Calu3 (cell line): ENCODE measurements at regions of chr14 and their contacts with region 1.

Region 1: DNA sequence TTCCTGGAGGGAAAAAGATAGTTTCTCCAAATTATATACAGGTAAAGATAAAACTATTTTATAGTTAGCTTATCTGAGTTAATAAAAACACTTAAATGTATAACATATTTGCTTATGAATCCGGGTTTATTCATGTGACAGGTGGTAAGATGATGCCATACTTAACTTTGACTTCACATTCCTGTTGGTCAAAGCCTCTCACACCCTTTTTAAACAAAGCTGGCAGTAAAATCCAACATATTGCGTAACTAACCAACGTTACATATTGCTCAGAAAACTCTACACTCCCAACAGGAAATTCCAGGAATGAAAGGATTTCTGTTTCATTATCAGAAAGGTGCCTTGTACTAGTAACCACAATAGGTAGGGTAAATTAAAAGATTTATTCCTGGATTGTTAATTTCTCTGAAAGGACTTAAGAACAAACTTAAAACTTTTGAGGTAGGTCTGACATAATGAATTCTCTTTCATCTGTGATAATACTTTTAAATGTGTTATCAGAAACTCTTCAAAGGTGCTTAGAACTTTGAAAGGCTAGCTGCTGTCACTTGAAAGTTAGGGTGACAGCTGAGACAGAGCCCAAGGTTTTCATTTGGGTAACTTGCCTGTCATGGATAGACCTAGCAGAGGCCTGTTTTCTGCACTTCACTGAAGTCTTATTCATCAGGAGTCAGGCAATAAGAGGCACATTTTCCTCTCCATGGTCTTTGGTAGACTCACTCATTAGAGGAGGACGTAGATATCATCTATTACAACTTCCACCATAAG is 23.8 kb upstream of the CATSPERB start:
- DNase-seq: peak; percentile 32
- H3K4me3 Mint-ChIP-seq: no peak overlapping the region
- H3K27ac Mint-ChIP-seq: peak overlapping the region; percentile 96
- H3K4me1 Mint-ChIP-seq: peaks cover 35% of the 10 kb centered on the region
- H3K27me3 Mint-ChIP-seq: no peaks in the 10 kb centered on the region
- CTCF ChIP-seq: no peak

Region 2: GRCh38 chr14:91649930-91650329 is 105.8 kb before region 1 on chr14:
- CTCF ChIA-PET with region 1: no interaction called
- intact Hi-C with region 1: loop called (anchors 10 kb)
- DNase-seq: peak; percentile 41
- H3K4me3 Mint-ChIP-seq: no peak overlapping the region
- H3K27ac Mint-ChIP-seq: no peak overlapping the region
- H3K4me1 Mint-ChIP-seq: peaks cover 9% of the 10 kb centered on the region
- H3K27me3 Mint-ChIP-seq: no peaks in the 10 kb centered on the region
- CTCF ChIP-seq: peak; percentile 19

Region 3: GRCh38 chr14:91732452-91733167 is 23.1 kb before region 1 on chr14:
- CTCF ChIA-PET with region 1: no interaction called
- intact Hi-C with region 1: no loop called
- DNase-seq: no peak
- H3K4me3 Mint-ChIP-seq: no peak overlapping the region
- H3K27ac Mint-ChIP-seq: no peak overlapping the region
- H3K4me1 Mint-ChIP-seq: peaks cover 9% of the 10 kb centered on the region
- H3K27me3 Mint-ChIP-seq: no peaks in the 10 kb centered on the region
- CTCF ChIP-seq: no peak

Region 4: DNA sequence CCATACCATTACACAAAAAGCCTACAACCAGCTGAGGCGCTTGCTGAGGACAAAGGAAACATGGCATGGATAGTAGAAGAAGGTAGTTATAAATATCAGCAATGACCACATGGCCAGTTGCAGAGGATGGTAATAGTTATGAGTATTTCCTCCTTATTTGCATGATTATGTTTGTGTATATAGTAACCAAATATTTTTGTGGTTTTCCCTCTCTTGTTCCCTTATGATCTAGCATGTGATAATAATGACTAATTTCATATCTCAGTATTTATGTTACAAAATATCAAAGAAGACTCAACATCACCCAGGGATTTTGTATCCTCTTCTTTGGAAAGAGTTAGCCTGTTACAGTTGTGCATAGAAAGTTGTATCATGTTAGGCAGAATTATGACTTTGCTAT is 10.4 kb before region 1 on chr14:
- CTCF ChIA-PET with region 1: no interaction called
- intact Hi-C with region 1: loop called (anchors 1 kb)
- DNase-seq: no peak
- H3K4me3 Mint-ChIP-seq: no peak overlapping the region
- H3K27ac Mint-ChIP-seq: peak overlapping the region; percentile 44
- H3K4me1 Mint-ChIP-seq: peaks cover 25% of the 10 kb centered on the region
- H3K27me3 Mint-ChIP-seq: no peaks in the 10 kb centered on the region
- CTCF ChIP-seq: no peak

Region 5: DNA sequence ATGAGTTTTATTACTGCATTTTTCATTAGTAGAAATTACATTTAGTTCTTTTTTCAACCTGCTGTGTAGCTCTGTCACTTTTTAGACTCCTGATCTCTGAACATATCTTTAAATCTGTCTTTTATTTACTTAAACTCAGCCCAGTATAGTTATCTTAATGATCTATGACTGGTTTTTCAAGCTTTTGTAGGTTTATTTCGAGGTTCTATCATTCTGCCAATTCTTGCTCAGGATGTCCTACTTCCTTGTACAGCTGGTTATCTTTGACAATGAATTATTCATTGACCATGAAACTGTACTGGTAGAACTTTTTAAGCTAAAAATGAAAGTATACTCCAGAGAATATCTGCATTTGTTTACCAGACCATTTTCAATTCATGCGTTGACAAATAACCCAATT is 73.8 kb after region 1 on chr14:
- CTCF ChIA-PET with region 1: no interaction called
- intact Hi-C with region 1: loop called (anchors 2 kb)
- DNase-seq: no peak
- H3K4me3 Mint-ChIP-seq: peak overlapping the region; percentile 47
- H3K27ac Mint-ChIP-seq: peak overlapping the region; percentile 79
- H3K4me1 Mint-ChIP-seq: peaks cover 73% of the 10 kb centered on the region
- H3K27me3 Mint-ChIP-seq: no peaks in the 10 kb centered on the region
- CTCF ChIP-seq: no peak

Region 6: GRCh38 chr14:91854327-91854934 is 98.7 kb after region 1 on chr14:
- CTCF ChIA-PET with region 1: no interaction called
- intact Hi-C with region 1: no loop called
- DNase-seq: no peak
- H3K4me3 Mint-ChIP-seq: no peak overlapping the region
- H3K27ac Mint-ChIP-seq: no peak overlapping the region
- H3K4me1 Mint-ChIP-seq: peaks cover 14% of the 10 kb centered on the region
- H3K27me3 Mint-ChIP-seq: peaks cover 11% of the 10 kb centered on the region
- CTCF ChIP-seq: no peak

Region 7: DNA sequence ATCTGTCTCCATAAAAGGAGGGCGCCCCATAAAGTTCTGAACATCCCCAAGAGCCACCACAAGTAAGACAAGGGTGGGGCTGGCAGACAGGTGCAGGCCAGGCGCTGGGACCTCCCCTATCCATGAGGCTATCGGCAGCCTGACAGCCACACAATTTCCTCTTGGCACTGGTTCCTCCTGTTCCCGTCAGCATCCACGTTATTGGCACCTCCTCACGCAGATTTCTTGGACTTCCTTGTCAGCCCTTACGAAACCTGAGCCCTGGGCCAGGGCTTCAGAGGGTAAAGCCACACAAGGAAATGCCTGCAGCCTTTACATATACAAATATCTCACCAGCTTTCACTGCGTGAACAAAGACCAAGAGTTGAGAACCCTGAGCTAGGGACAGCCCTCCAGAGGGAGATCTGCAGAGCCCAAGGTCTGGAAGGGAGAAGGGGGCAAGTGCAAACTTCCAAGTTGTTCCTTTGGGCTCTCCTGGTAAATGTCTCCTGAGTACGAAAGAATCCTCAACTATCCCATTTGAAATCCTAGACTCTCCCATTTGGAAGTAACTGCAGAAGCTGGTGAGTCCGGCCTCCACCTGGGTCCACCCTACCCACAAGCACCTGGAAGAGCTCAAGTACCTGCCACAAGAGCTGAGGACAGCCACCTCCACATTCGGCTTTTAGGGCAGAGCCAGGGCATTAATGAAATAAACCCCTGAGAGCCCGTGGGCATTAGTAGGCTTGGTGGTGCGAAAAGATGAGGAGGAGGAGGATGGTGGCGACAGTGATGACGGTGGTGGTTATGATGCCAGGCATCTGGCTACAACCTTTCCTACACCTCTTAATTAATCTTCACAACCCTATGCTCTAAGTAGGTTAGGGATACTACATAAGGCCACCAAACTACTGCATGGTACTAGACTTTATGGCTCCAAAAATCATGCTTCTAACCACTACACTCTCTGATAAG is 117.1 kb after region 1 on chr14:
- CTCF ChIA-PET with region 1: no interaction called
- intact Hi-C with region 1: loop called (anchors 2 kb)
- DNase-seq: peak; percentile 92
- H3K4me3 Mint-ChIP-seq: peak overlapping the region; percentile 56
- H3K27ac Mint-ChIP-seq: peak overlapping the region; percentile 98
- H3K4me1 Mint-ChIP-seq: peaks cover 57% of the 10 kb centered on the region
- H3K27me3 Mint-ChIP-seq: no peaks in the 10 kb centered on the region
- CTCF ChIP-seq: no peak